PC-9 (cell line): ENCODE measurements at regions of chr1 and their contacts with region 1.

Region 1: GRCh38 chr1:16111771-16112595 is 38.5 kb upstream of the FAM131C start:
- DNase-seq: no peak
- H3K4me3 ChIP-seq: no peak overlapping the region
- H3K27ac ChIP-seq: no peak overlapping the region
- H3K4me1 ChIP-seq: peaks cover 21% of the 10 kb centered on the region
- H3K27me3 ChIP-seq: no peaks in the 10 kb centered on the region
- CTCF ChIP-seq: no peak

Region 2: GRCh38 chr1:16420424-16421118 is 308.6 kb after region 1 on chr1:
- CTCF ChIA-PET with region 1: interaction called, 14 read pairs
- POLR2A ChIA-PET with region 1: no interaction called
- intact Hi-C with region 1: no loop called
- DNase-seq: no peak
- H3K4me3 ChIP-seq: no peak overlapping the region
- H3K27ac ChIP-seq: no peak overlapping the region
- H3K4me1 ChIP-seq: no peaks in the 10 kb centered on the region
- H3K27me3 ChIP-seq: no peaks in the 10 kb centered on the region
- CTCF ChIP-seq: no peak